GM13976 (cell line): ENCODE measurements at regions of chr13 and their contacts with region 1.

Region 1: GRCh38 chr13:99199541-99200431 is 868 bp upstream of the UBAC2 start:
- DNase-seq: no peak
- CTCF ChIP-seq: no peak

Region 2: DNA sequence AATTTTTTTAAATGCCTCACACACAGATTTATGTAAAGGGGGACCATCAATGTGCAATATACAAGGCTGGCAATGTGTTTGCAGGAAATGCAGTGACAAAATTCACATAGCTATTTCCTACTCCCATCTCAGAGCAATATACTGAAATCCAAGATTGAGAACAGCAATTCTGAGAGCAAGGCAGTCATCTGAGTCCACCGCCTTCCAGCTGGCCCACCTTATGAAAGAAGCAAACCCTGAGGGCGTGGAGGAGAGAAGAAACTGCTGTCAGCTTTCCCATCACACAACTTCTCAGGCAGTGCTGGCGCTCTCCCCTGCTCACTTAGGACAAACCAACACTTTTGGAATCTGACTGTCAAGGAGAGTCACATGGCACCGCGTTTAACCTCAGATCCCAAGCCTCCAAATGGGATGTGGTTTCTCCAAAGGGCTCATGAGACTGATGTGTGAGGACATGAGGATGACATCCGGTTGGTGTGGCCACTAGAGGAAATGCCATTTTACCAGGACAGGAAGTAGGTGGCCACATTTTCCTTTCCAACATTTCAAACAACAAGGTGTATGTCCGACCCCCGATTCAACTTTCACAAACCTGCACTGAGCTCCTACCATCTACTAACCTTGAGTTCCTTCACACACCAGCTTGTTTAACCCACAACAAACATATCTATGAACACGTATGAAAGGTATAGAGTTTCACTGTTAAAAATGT is 218.3 kb before region 1 on chr13:
- in situ Hi-C with region 1: no loop called
- DNase-seq: no peak
- CTCF ChIP-seq: no peak

Region 3: GRCh38 chr13:99264051-99264450 is 64.3 kb after region 1 on chr13:
- in situ Hi-C with region 1: loop called (anchors 5 kb)
- DNase-seq: no peak
- CTCF ChIP-seq: no peak

Region 4: GRCh38 chr13:99415851-99416331 is 216.1 kb after region 1 on chr13:
- in situ Hi-C with region 1: no loop called
- DNase-seq: no peak
- CTCF ChIP-seq: no peak